Endothelial cell of umbilical vein (primary cell): ENCODE measurements at regions of chr12 and their contacts with region 1.

Region 1: GRCh38 chr12:27424631-27425230 is 21.8 kb upstream of the SMCO2 start:
- DNase-seq: peak; percentile 65
- H3K4me3 ChIP-seq: no peak overlapping the region
- H3K27ac ChIP-seq: no peak overlapping the region
- H3K4me1 ChIP-seq: no peaks in the 10 kb centered on the region
- H3K27me3 ChIP-seq: no peaks in the 10 kb centered on the region
- CTCF ChIP-seq: peak; percentile 56 to 65
- POLR2A ChIP-seq: no peak

Region 2: DNA sequence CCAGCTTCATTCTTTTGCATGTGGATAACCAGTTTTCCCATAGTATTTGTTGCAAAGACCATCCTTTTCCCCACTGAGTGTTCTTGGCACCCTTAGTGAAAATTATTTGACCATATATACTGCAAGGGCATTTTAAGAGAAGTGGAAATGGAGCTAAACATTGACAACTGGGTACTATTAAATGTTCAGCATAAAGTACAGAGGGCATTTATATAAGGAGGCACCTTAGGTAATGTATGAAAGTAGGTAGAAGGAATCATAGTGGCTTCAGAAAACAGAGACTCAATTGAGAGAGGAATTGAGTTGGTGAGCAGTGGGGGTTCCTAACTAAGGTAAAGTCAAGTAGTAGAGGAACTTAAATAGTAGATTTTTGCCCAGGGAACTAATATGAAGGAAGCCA is 12.7 kb before region 1 on chr12:
- CTCF ChIA-PET with region 1: interaction called, 17 read pairs
- POLR2A ChIA-PET with region 1: no interaction called
- dilution Hi-C with region 1: no loop called
- intact Hi-C with region 1: no loop called
- DNase-seq: no peak
- H3K4me3 ChIP-seq: no peak overlapping the region
- H3K27ac ChIP-seq: no peak overlapping the region
- H3K4me1 ChIP-seq: peaks cover 4% of the 10 kb centered on the region
- H3K27me3 ChIP-seq: no peaks in the 10 kb centered on the region
- CTCF ChIP-seq: no peak
- POLR2A ChIP-seq: no peak

Region 3: GRCh38 chr12:27652174-27652763 is 227.5 kb after region 1 on chr12:
- CTCF ChIA-PET with region 1: interaction called, 13 read pairs
- POLR2A ChIA-PET with region 1: no interaction called
- dilution Hi-C with region 1: no loop called
- intact Hi-C with region 1: loop called (anchors 1 kb)
- DNase-seq: peak; percentile 86
- H3K4me3 ChIP-seq: no peak overlapping the region
- H3K27ac ChIP-seq: no peak overlapping the region
- H3K4me1 ChIP-seq: peaks cover 8% of the 10 kb centered on the region
- H3K27me3 ChIP-seq: no peaks in the 10 kb centered on the region
- CTCF ChIP-seq: peak; percentile 67 to 69
- POLR2A ChIP-seq: no peak

Region 4: GRCh38 chr12:27703710-27704452 is 279.1 kb after region 1 on chr12:
- CTCF ChIA-PET with region 1: interaction called, 6 read pairs
- POLR2A ChIA-PET with region 1: no interaction called
- dilution Hi-C with region 1: no loop called
- intact Hi-C with region 1: loop called (anchors 5 kb)
- DNase-seq: peak; percentile 87
- H3K4me3 ChIP-seq: no peak overlapping the region
- H3K27ac ChIP-seq: no peak overlapping the region
- H3K4me1 ChIP-seq: no peaks in the 10 kb centered on the region
- H3K27me3 ChIP-seq: no peaks in the 10 kb centered on the region
- CTCF ChIP-seq: peak; percentile 78 to 79
- POLR2A ChIP-seq: no peak